K562 (cell line): ENCODE measurements at regions of chr1 and their contacts with region 1.

Region 1: GRCh38 chr1:12619792-12620487 is 1.9 kb upstream of the DHRS3 start:
- DNase-seq: peak; percentile 83 to 92 (median 84)
- ATAC-seq: peak; percentile 67
- H3K4me3 ChIP-seq: peak overlapping the region; percentile 71
- H3K27ac ChIP-seq: peak overlapping the region; percentile 94
- H3K4me1 ChIP-seq: peaks cover 19 to 40% of the 10 kb centered on the region in 2 experiments
- H3K27me3 ChIP-seq: no peaks in the 10 kb centered on the region
- CTCF ChIP-seq: peak; percentile 95 to 99 (median 98)
- EP300 ChIP-seq: peak; percentile 31; the same call in 1 of the 2 replicates
- POLR2A ChIP-seq: no peak
- RAD21 ChIP-seq: peak; percentile 98 to 99

Region 2: DNA sequence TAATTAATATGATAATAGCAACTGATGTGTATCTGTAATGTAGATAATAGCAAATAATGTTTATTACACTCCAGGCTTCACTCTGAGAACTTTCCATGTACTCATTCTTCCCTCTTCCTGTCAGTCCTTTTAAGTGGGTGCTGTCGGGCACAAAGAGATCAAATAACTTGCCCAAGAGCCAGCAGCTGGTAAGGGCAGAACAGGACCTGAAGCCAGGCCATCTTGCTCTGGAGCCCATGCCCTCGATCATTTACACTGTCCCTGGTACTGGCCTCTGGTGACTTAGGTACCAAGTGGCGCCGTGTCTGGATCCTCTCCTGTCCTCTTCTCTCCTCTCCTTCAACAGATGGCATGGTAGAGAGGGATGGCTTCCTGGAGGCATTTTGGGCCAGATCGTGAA is 293.0 kb before region 1 on chr1:
- CTCF ChIA-PET with region 1: no interaction called
- POLR2A ChIA-PET with region 1: interaction called, 11 read pairs
- in situ Hi-C with region 1: loop called (anchors 25 kb)
- intact Hi-C with region 1: no loop called
- DNase-seq: no peak
- ATAC-seq: no peak
- H3K4me3 ChIP-seq: no peak overlapping the region
- H3K27ac ChIP-seq: no peak overlapping the region
- H3K4me1 ChIP-seq: no peaks in the 10 kb centered on the region
- H3K27me3 ChIP-seq: no peaks in the 10 kb centered on the region
- CTCF ChIP-seq: no peak
- EP300 ChIP-seq: no peak
- POLR2A ChIP-seq: no peak
- RAD21 ChIP-seq: no peak

Region 3: GRCh38 chr1:12448746-12449177 is 171.2 kb before region 1 on chr1:
- CTCF ChIA-PET with region 1: no interaction called
- POLR2A ChIA-PET with region 1: no interaction called
- in situ Hi-C with region 1: no loop called
- intact Hi-C with region 1: loop called (anchors 2 kb)
- DNase-seq: peak; percentile 76 to 99 (median 85)
- ATAC-seq: peak; percentile 94
- H3K4me3 ChIP-seq: no peak overlapping the region
- H3K27ac ChIP-seq: peak overlapping the region; percentile 95
- H3K4me1 ChIP-seq: peaks cover 29 to 87% of the 10 kb centered on the region in 2 experiments
- H3K27me3 ChIP-seq: no peaks in the 10 kb centered on the region
- CTCF ChIP-seq: 0 out of 6 replicates have a peak, but pooled peaks of 1 of the 3 experiments have one; percentile 6
- EP300 ChIP-seq: peak; percentile 100
- POLR2A ChIP-seq: no peak
- RAD21 ChIP-seq: peak; percentile 33 to 52; a peak in 2 of 4 replicates

Region 4: GRCh38 chr1:12528021-12528852 is 91.7 kb before region 1 on chr1:
- CTCF ChIA-PET with region 1: no interaction called
- POLR2A ChIA-PET with region 1: no interaction called
- in situ Hi-C with region 1: no loop called
- intact Hi-C with region 1: loop called (anchors 5 kb)
- DNase-seq: peak; percentile 62 to 93 (median 70)
- ATAC-seq: peak; percentile 78
- H3K4me3 ChIP-seq: no peak overlapping the region
- H3K27ac ChIP-seq: peak overlapping the region; percentile 89
- H3K4me1 ChIP-seq: peaks cover 44 to 49% of the 10 kb centered on the region in 2 experiments
- H3K27me3 ChIP-seq: no peaks in the 10 kb centered on the region
- CTCF ChIP-seq: no peak
- EP300 ChIP-seq: peak; percentile 44; the same call in 1 of the 2 replicates
- POLR2A ChIP-seq: no peak
- RAD21 ChIP-seq: peak in 1 of 2 experiments; percentile 19; a peak in 1 of 4 replicates

Region 5: GRCh38 chr1:12630946-12631530 is 11.1 kb after region 1 on chr1:
- CTCF ChIA-PET with region 1: interaction called, 3 read pairs
- POLR2A ChIA-PET with region 1: interaction called, 14 read pairs
- in situ Hi-C with region 1: no loop called
- intact Hi-C with region 1: no loop called
- DNase-seq: no peak
- ATAC-seq: no peak
- H3K4me3 ChIP-seq: no peak overlapping the region
- H3K27ac ChIP-seq: no peak overlapping the region
- H3K4me1 ChIP-seq: peaks cover 3 to 11% of the 10 kb centered on the region in 2 experiments; a peak in 4 of 5 replicates
- H3K27me3 ChIP-seq: peaks cover 2 to 14% of the 10 kb centered on the region in 2 experiments; a peak in 2 of 5 replicates
- CTCF ChIP-seq: no peak
- EP300 ChIP-seq: no peak
- POLR2A ChIP-seq: no peak
- RAD21 ChIP-seq: no peak